Ascending aorta (tissue), 2 donors: ENCODE measurements at regions of chr9 and their contacts with region 1.

Region 1: DNA sequence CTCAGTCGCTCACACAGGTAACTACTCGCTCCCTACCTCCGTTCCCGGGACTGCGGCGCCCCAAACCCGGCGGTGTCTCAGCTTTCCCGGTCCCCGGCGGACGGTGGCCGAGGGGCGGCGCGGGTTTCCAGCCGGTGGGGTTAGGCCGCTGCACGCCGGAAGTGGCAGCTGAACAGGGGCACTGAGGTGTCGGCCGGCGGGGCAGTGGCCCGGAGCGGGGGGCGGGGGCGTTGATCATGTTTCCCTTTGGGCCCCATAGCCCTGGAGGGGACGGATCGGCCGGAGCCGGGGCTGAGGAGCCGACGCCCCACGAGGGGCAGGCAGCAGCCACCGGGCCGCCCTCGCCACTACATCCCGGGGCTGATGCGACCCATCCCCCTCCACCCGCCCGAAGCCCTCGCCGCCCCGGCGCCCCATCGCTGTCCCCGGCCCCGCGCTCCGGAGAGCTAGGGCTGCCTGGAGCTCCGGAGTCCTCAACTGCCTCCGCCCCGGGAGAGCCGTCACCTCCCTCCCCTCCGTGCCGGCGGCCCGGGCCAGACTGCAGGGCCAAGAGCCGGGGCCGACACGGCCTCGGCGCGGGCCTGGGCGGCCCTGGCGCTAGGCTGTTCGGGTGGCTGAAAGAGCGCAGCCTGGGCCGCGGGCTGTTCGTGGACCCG is at the start of gene DCAF10:
- DNase-seq: peak in 1 of 2 donors; percentile 92
- H3K4me3 ChIP-seq: peak within 1 kb of the TSS; percentile 86 to 97
- H3K27ac ChIP-seq: peak within 1 kb of the TSS; percentile 87 to 89
- H3K4me1 ChIP-seq: peaks cover 0 to 22% of the 10 kb centered on the region in 2 donors
- H3K27me3 ChIP-seq: no peaks in the 10 kb centered on the region
- CTCF ChIP-seq: peak in 1 of 3 experiments; percentile 19
- total RNA-seq, gene DCAF10: 23.5 TPM

Region 2: DNA sequence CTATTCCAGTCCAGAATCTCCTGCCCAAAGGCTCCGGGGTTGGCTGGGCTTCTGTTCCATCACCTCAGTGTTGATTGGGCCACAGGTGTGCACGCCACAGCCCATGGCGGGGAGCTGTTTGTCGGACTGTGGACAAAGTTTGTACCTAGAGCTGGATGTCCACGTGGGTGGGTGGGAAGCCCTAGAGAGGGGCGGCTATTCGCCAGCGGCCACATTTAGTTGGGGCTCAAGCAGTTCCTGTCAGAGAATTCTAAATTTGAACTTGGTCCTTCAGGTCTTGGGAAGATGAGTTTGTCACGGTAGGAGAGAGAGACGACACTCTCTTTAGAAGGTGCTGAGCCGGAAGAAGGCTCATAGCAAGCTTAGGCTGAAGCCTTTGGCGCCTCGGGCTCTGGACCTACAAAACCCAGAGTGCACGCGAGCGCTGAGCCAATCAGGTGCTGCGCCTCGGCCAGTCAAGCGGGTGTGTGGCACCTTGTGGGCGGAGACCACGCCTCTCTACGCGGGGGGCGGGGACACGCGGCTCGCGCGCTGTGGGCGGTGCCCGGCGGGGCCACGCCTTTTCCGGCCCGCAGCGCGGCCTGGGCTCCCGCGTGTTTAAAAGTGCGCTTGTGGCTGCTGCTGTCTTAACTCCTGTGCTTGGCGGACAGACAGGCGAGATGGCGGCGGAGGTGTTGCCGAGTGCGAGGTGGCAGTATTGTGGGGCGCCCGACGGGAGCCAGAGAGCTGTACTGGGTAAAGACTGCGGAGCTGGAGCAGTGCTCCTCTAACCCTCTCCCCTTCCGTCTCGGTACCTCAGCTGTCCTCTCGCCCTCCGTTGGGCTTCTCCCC is 315.2 kb before region 1 on chr9 and contains the start of gene POLR1E:
- intact Hi-C with region 1: loop called (anchors 5 kb)
- DNase-seq: peak; percentile 84 to 97
- H3K4me3 ChIP-seq: peak within 1 kb of the TSS; percentile 53 to 88
- H3K27ac ChIP-seq: peak within 1 kb of the TSS; percentile 88 to 94
- H3K4me1 ChIP-seq: peaks cover 12 to 19% of the 10 kb centered on the region in 2 donors
- H3K27me3 ChIP-seq: no peaks in the 10 kb centered on the region
- CTCF ChIP-seq: no peak
- total RNA-seq, gene POLR1E: 18.0 TPM

Region 3: DNA sequence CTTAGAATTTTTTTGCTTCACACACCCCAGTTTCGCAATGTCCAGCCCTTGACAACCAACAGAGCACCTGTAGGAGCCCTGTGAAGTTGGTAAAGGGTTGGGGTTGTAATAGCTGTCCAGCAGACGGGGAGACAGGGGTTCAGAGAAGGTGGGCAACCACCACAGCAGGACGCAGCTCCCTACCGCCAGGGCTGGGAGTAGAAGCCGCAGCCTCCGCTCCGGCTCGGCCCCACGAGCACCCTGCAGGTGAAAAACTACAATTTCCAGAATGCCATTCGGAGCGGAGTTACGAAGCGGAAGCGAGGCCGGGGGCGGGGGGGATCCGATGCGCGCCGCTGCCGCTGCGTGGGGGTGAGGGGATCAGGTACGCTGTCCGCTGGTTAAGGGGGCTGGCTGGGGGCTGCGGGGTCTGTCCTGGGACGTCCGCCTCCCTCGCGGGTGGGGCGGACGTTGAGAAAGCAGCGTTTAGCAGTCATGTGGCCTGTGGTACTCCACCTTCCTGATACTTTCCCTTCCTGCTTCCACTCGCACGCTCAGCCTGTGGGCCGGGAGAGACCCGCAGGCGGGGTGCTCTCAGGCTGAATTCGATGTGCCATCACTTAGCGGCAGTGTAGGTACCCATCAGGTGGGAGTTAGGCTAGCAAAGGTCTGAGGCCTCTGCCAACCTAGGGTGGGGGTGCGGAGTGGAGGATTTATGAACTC is 47.1 kb before region 1 on chr9 and contains the start of gene TRMT10B:
- intact Hi-C with region 1: loop called (anchors 1 kb)
- DNase-seq: peak in 1 of 2 donors; percentile 73
- H3K4me3 ChIP-seq: peak within 1 kb of the TSS; percentile 70 to 83
- H3K27ac ChIP-seq: peak within 1 kb of the TSS; percentile 83 to 90
- H3K4me1 ChIP-seq: peaks cover 0 to 9% of the 10 kb centered on the region in 2 donors
- H3K27me3 ChIP-seq: no peaks in the 10 kb centered on the region
- CTCF ChIP-seq: peak in 1 of 3 experiments; percentile 4
- total RNA-seq, gene TRMT10B: 0.53 TPM

Region 4: GRCh38 chr9:37769995-37770394 is 30.8 kb before region 1 on chr9:
- intact Hi-C with region 1: no loop called
- DNase-seq: no peak
- H3K4me3 ChIP-seq: no peak overlapping the region
- H3K27ac ChIP-seq: no peak overlapping the region
- H3K4me1 ChIP-seq: no peaks in the 10 kb centered on the region
- H3K27me3 ChIP-seq: no peaks in the 10 kb centered on the region
- CTCF ChIP-seq: no peak

Region 5: DNA sequence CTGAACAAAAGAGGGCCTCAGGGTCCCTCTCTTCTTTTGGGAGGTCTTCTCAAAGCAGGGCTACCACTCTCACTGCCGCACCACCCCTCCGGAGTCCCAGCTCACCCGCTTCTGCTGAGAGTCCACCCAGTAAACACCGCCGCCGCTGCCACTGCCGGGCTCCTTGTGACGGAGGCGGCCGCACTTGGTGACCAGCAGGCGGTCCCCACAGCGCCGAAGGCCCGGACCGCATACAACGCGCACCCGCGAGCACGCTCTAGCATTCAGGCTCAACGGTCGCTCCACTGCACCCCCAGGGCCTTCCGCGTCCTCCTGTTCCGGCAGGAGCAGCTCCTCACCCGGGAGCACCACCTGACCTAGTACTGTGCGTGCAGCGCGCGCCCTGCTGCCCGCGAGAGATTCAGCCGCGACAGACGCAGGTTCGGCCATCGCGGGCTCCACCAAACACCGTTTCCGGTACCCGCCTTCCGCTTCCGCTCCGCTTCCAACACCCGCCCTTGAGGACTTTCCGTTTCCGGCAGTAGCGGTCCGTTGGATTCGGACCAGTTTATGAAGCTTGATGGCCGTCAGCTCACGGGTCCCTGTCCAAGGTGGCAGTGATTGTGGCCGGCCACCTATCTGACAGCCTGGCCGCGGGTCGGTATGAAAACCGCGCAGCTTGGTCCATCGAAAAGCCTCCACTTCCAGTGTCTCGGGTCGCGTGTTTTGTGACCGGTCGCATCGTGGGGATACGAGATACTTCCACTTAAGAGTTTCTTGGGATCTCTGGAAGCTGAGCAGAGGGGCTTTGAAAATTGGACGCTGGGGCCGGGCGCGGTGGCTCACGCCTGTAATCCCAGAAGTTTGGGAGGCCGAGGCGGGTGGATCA is 15.9 kb before region 1 on chr9 and contains the start of gene EXOSC3:
- intact Hi-C with region 1: loop called (anchors 1 kb)
- DNase-seq: peak; percentile 23 to 93
- H3K4me3 ChIP-seq: peak within 1 kb of the TSS; percentile 89 to 90
- H3K27ac ChIP-seq: peak within 1 kb of the TSS; percentile 78 to 81
- H3K4me1 ChIP-seq: peaks cover 0 to 10% of the 10 kb centered on the region in 2 donors
- H3K27me3 ChIP-seq: no peaks in the 10 kb centered on the region
- CTCF ChIP-seq: peak in 1 of 3 experiments; percentile 13
- total RNA-seq, gene EXOSC3: 9.0 TPM